Activated CD4-positive, alpha-beta memory T cell treated with anti-CD3 and anti-CD28 coated beads, Interleukin-2, amount 10 ng/mL, durations not matched to agents 7 days and 5 days (primary cell): ENCODE measurements at regions of chr20 and their contacts with region 1.

Region 1: DNA sequence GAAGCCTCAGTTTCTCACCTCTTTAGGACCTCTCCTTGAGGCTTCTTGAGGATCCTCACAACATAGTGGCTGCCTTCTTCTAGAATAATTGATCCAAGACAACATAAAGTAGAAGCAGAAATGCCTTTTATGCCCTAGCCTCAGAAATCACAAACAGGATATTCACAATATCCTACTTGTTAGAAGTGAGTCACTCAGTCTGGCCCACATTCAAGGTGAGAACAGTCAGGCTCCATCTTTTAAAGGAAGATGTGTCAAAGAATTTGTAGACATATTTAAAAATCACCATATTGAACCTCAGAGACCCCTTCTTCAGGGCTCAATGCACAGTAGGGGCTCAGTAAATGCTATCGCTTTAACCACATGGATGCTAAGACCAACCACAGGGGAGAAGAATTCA is 20.8 kb upstream of the FAM83D start:
- DNase-seq: no peak
- H3K4me3 Mint-ChIP-seq: no peak overlapping the region
- H3K27ac Mint-ChIP-seq: peak overlapping the region; percentile 45
- H3K4me1 Mint-ChIP-seq: peaks cover 10% of the 10 kb centered on the region
- H3K27me3 Mint-ChIP-seq: no peaks in the 10 kb centered on the region

Region 2: GRCh38 chr20:38805502-38805957 is 99.8 kb before region 1 on chr20 and contains the start of gene PPP1R16B:
- CTCF ChIA-PET with region 1: no interaction called
- POLR2A ChIA-PET with region 1: no interaction called
- DNase-seq: peak; percentile 88
- H3K4me3 Mint-ChIP-seq: peak within 1 kb of the TSS; percentile 91
- H3K27ac Mint-ChIP-seq: peak within 1 kb of the TSS; percentile 100
- H3K4me1 Mint-ChIP-seq: peaks cover 68% of the 10 kb centered on the region
- H3K27me3 Mint-ChIP-seq: no peaks in the 10 kb centered on the region
- total RNA-seq, gene PPP1R16B: 113 to 119 TPM

Region 3: DNA sequence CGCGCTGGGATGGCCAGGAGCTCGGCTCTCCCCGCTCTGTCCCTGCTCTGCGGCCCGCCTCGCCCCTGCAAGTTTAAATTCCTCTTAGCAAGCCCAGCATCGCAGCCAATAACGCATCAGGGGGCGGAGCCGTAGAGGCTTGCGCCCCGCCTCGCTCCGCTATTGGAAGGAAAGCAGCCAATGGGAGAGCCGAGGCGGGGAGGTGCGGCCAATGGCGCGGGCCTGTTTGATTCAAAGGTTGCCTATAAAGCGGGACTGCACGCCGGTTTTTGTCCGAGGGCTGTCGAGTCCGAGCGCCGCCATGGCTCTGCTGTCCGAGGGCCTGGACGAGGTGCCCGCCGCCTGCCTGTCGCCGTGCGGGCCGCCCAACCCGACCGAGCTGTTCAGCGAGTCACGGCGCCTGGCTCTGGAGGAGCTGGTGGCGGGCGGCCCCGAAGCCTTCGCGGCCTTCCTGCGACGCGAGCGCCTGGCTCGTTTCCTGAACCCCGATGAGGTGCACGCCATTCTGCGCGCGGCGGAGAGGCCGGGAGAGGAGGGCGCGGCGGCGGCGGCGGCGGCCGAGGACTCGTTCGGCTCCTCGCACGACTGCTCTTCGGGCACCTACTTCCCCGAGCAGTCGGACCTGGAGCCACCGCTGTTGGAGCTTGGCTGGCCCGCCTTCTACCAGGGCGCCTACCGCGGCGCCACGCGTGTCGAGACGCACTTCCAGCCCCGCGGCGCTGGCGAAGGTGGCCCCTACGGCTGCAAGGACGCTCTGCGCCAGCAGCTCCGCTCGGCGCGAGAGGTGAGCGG is 21.0 kb after region 1 on chr20 and contains the start of gene FAM83D:
- CTCF ChIA-PET with region 1: no interaction called
- POLR2A ChIA-PET with region 1: interaction called, 11 read pairs
- DNase-seq: peak; percentile 98
- H3K4me3 Mint-ChIP-seq: peak within 1 kb of the TSS; percentile 81
- H3K27ac Mint-ChIP-seq: peak within 1 kb of the TSS; percentile 62
- H3K4me1 Mint-ChIP-seq: peaks cover 40% of the 10 kb centered on the region
- H3K27me3 Mint-ChIP-seq: no peaks in the 10 kb centered on the region
- total RNA-seq, gene FAM83D: 18.9 to 19.9 TPM